OCI-LY7 (cell line): ENCODE measurements at regions of chr13 and their contacts with region 1.

Region 1: DNA sequence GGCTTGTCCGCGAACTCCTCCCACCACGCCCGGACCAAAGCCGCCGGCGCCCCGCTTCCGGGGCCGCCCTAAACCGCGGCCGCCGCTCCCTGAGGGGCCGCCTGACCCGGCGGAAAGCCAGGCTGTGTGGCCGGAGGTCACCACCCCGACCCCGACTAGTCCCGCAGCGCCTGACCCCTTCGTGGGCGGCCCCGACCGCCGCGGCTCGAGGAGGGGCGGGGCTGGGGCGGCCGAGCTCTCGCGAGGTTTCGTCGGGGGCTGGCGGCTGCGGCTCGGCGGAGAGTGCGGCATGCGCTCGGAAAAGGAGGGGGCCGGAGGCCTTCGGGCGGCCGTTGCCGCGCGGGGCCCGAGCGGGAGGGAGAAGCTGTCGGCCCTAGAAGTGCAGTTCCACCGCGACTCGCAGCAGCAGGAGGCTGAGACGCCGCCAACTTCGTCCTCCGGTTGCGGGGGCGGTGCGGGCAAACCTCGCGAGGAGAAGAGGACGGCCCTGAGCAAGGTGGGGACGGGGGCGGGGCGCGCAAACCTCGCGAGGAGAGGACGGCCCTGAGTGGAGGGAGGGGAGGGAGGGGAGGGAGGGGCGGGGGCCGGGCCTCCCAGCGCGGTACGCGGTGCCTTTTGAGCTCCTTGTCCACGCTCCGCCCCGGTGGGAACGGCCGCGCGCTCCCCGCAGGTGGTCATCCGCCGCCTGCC is at the start of gene UPF3A:
- DNase-seq: peak; percentile 81
- H3K4me3 ChIP-seq: peak within 1 kb of the TSS; percentile 85
- H3K27ac ChIP-seq: peak within 1 kb of the TSS; percentile 86
- H3K4me1 ChIP-seq: peaks cover 20% of the 10 kb centered on the region
- CTCF ChIP-seq: no peak
- total RNA-seq, gene UPF3A: 26.2 and 27.8 TPM in 2 replicates

Region 2: DNA sequence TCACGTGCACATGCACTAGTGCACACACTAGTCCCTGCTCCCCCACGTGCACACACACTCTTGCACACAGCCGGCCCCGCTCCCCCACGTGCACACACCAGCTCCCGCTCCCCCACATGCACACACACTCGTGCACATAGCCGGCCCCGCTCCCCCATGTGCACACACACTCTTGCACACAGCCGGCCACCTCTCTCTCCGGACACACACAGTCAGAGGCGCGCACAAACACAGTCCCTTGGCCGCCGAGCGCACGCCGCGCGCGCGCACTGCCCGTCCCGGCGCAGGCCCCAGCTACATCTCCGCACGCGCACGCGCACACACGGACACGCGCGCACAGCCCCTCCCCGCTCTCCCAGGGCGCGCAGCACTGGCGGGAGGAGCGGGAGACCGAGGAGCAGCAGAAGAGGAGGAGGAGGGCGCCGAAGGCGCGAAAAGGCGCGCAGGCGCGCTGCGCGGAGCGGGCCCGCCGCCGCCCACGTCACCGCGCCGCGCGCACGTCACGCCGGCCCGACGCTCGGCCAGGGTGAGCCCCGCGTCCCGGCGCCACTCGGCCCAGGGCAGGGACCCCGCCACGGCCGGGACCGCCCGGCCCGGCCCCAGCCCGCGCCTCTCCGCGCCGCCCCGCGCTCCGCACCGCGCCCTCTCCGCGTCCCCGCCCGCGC is 697.2 kb before region 1 on chr13 and contains the start of gene TFDP1:
- CTCF ChIA-PET with region 1: no interaction called
- POLR2A ChIA-PET with region 1: no interaction called
- intact Hi-C with region 1: no loop called
- DNase-seq: peak; percentile 82
- H3K4me3 ChIP-seq: peak within 1 kb of the TSS; percentile 90
- H3K27ac ChIP-seq: peak within 1 kb of the TSS; percentile 45
- H3K4me1 ChIP-seq: peaks cover 14% of the 10 kb centered on the region
- CTCF ChIP-seq: no peak
- total RNA-seq, gene TFDP1: 81.2 and 87.9 TPM in 2 replicates

Region 3: DNA sequence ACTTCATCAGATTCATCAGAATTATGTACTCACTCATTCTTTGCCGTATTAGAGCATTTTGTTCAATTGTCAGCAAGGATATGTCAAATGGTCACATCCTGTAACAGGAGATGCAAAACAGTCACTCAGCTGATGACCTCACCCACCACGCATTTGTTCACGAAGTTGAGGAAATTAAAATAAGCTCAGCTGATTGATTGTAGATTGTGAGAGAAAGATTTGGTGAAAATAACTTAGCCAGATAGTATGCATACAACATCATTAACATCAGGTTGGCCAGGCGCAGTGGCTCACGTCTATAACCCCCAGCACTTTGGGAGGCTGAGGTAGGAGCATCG is 69.4 kb before region 1 on chr13:
- CTCF ChIA-PET with region 1: no interaction called
- POLR2A ChIA-PET with region 1: no interaction called
- intact Hi-C with region 1: no loop called
- DNase-seq: no peak
- H3K4me3 ChIP-seq: no peak overlapping the region
- H3K27ac ChIP-seq: no peak overlapping the region
- H3K4me1 ChIP-seq: no peaks in the 10 kb centered on the region
- CTCF ChIP-seq: no peak

Region 4: DNA sequence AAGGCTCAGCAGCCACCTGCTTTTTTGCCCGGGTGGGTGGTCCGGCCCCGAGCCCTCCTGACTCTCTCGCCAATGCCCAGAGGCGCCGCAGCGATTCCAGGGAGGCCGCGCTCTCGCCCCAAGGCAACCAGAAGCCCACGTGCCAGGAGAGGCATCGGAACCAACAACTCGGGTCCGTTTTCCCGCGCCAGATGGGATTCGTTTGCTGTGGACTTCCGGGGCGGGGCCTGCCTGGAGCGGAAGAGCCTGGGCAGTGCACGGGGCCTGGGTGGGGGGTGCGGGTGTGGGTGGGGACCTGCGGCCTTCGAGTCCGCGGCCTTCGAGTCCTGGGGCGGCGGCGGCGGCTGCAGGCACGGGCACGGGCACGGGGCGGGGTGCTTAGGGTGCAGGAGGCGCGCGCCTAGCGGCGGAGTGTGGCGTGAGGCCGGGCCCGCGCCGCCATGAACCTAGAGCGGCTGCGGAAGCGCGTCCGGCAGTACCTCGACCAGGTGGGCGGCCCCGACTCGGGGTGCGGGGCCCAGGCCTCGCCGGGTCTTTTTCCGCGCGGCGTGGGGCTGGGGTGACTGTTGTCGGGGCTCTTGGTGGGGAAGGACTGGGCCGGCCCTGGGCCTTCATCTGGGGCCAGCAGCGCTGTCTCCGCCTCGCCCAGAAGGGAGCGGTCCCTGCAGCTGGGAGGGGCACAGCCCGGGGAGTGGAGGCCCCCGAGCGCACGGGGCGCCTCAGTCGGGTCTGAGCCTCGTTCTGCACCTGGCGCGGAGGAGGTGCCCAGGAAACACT is 46.7 kb before region 1 on chr13 and contains the start of gene CDC16:
- CTCF ChIA-PET with region 1: no interaction called
- POLR2A ChIA-PET with region 1: interaction called, 3 read pairs
- intact Hi-C with region 1: loop called (anchors 2 kb)
- DNase-seq: peak; percentile 88
- H3K4me3 ChIP-seq: peak within 1 kb of the TSS; percentile 80
- H3K27ac ChIP-seq: peak within 1 kb of the TSS; percentile 64
- H3K4me1 ChIP-seq: peaks cover 16% of the 10 kb centered on the region
- CTCF ChIP-seq: no peak
- total RNA-seq, gene CDC16: 21.7 and 23.1 TPM in 2 replicates

Region 5: GRCh38 chr13:114259974-114260373 is 21.5 kb before region 1 on chr13:
- CTCF ChIA-PET with region 1: no interaction called
- POLR2A ChIA-PET with region 1: interaction called, 7 read pairs
- intact Hi-C with region 1: loop called (anchors 2 kb)
- DNase-seq: peak; percentile 61
- H3K4me3 ChIP-seq: peak overlapping the region; percentile 40
- H3K27ac ChIP-seq: peak overlapping the region; percentile 89
- H3K4me1 ChIP-seq: peaks cover 59% of the 10 kb centered on the region
- CTCF ChIP-seq: 0 out of 2 replicates have a peak, but pooled peaks have one; percentile 18

Region 6: GRCh38 chr13:114303700-114304327 is 22.3 kb after region 1 on chr13:
- CTCF ChIA-PET with region 1: no interaction called
- POLR2A ChIA-PET with region 1: no interaction called
- intact Hi-C with region 1: no loop called
- DNase-seq: no peak
- H3K4me3 ChIP-seq: no peak overlapping the region
- H3K27ac ChIP-seq: no peak overlapping the region
- H3K4me1 ChIP-seq: no peaks in the 10 kb centered on the region
- CTCF ChIP-seq: no peak

Region 7: DNA sequence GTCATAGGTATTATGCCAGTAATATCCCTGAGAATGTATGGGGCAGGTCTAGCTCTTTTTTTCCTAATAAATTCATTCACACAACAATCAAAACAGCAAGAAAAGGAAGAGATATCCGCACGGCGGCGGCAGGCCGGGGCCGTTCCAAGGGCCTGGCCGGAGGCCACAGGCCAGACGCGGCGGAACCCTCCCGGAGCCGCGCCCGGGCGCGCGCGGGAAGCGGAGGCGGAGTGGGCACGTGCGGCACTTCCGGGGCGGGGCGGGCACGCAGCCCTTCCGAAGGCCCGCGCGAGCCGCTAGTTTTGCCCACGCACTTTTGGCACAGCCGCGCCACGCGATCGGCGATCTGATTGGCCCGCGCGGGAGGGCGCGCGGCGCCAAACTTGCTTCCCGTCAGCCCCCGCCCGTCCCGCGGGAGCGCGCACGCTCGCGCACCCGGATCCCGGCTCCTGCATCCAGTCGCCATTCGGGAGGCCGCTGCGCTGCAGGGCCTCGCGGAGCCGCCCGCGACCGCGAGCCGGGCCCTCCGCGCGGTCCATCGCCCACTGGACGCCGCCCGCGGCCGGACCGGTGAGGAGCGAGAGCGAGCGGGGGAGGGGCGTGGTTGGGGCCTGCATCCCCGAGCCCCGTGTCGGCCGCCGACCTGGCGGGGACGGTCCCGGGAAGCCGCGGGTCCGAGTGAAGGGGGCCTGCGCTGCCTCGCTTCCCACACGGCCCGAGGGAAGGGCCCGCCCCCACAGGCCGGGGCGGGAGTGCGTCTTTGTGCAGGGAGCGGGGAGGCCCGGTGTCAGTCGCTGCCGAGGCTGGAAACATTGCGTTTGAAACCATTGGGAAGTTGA is 32.8 kb after region 1 on chr13 and contains the start of gene CHAMP1:
- CTCF ChIA-PET with region 1: no interaction called
- POLR2A ChIA-PET with region 1: interaction called, 3 read pairs
- intact Hi-C with region 1: loop called (anchors 1 kb)
- DNase-seq: peak; percentile 89
- H3K4me3 ChIP-seq: peak within 1 kb of the TSS; percentile 91
- H3K27ac ChIP-seq: peak within 1 kb of the TSS; percentile 98
- H3K4me1 ChIP-seq: peaks cover 48% of the 10 kb centered on the region
- CTCF ChIP-seq: no peak
- total RNA-seq, gene CHAMP1: 12.4 and 13.6 TPM in 2 replicates